ENCODE measurements at regions of chrX and their contacts with region 1.

Region 1: DNA sequence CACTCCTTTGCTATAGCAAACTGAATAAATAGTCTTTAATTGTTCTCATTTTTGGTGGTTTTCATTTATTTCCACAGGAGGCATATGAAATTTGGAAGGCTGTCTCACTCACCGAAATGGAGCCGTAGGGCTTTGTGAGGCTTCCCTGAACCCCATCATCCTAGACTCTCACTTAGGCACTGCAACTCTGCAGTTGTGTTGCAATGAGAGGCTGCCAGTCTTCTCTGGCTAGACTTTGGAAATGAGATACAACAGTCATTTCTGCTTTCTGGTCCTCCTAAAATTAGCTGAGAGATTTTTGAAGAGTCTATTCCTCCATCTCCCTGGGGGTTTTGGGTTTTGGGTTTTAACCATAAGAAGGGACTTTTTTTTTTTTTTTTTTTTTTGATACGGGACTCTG is 146.5 kb downstream of the SH3BGRL start:
- DNase-seq: no peak
- H3K4me3 Mint-ChIP-seq: no peak overlapping the region
- H3K27ac Mint-ChIP-seq: no peak overlapping the region
- H3K4me1 Mint-ChIP-seq: no peaks in the 10 kb centered on the region
- H3K27me3 Mint-ChIP-seq: no peaks in the 10 kb centered on the region
- CTCF ChIP-seq: no peak

Region 2: GRCh38 chrX:80335062-80335830 is 1013.1 kb before region 1 on chrX:
- CTCF ChIA-PET with region 1: no interaction called
- intact Hi-C with region 1: loop called (anchors 5 kb)
- DNase-seq: no peak
- H3K4me3 Mint-ChIP-seq: no peak overlapping the region
- H3K27ac Mint-ChIP-seq: no peak overlapping the region
- H3K4me1 Mint-ChIP-seq: no peaks in the 10 kb centered on the region
- H3K27me3 Mint-ChIP-seq: no peaks in the 10 kb centered on the region
- CTCF ChIP-seq: no peak

Region 3: DNA sequence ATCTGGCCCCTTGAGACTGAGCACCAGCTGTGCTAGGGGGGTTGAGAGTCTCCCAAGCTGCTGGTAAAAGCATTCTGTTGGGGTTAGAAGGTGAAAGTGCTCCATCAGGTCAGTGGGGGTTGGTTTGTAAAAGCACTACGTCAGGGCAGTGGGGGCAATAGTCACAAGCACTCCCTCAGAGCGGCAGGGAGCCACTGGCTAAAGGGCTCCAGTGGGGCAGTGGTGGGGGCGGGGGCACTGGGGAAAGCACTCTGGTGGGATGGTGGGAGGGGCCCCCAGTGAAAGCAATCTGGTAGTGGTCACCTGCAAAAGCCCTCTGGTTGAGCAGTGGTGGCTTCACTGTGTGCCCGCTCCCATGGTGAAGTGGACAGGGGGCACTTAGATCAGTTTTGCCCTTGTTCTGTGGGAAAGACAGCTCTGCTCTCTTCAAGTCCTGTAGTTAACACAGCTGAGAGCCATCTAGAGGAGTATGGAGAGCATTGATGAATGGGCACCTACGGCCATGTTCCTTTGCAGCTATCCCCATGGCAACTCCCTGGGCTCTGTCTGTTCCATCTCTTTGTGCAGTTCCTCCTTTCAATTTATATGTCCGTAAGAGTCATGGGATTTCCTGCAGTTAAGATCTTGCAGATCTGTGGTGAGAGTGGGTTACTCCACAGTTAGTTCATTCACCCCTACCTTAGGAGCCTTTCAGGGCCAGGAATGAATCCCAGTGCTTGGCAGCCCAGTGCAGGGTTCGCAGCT is 40.1 kb before region 1 on chrX:
- CTCF ChIA-PET with region 1: no interaction called
- intact Hi-C with region 1: no loop called
- DNase-seq: no peak
- H3K4me3 Mint-ChIP-seq: no peak overlapping the region
- H3K27ac Mint-ChIP-seq: no peak overlapping the region
- H3K4me1 Mint-ChIP-seq: no peaks in the 10 kb centered on the region
- H3K27me3 Mint-ChIP-seq: no peaks in the 10 kb centered on the region
- CTCF ChIP-seq: no peak

Measured in Calu3 (cell line).